ENCODE measurements at regions of chr5 and their contacts with region 1.

Region 1: GRCh38 chr5:132369474-132370180 is at the start of gene SLC22A5:
- DNase-seq: no peak
- ATAC-seq: peak; percentile 97
- H3K4me3 ChIP-seq: peak within 1 kb of the TSS; percentile 84
- H3K27ac ChIP-seq: peak within 1 kb of the TSS; percentile 31; the same call in 1 of the 2 replicates
- H3K4me1 ChIP-seq: peaks cover 8% of the 10 kb centered on the region
- H3K27me3 ChIP-seq: no peaks in the 10 kb centered on the region; a peak in 2 of 4 replicates
- CTCF ChIP-seq: no peak
- EP300 ChIP-seq: no peak
- POLR2A ChIP-seq: peak; percentile 71
- RAD21 ChIP-seq: no peak
- polyA plus RNA-seq, gene SLC22A5: 1.1 to 1.9 TPM

Region 2: DNA sequence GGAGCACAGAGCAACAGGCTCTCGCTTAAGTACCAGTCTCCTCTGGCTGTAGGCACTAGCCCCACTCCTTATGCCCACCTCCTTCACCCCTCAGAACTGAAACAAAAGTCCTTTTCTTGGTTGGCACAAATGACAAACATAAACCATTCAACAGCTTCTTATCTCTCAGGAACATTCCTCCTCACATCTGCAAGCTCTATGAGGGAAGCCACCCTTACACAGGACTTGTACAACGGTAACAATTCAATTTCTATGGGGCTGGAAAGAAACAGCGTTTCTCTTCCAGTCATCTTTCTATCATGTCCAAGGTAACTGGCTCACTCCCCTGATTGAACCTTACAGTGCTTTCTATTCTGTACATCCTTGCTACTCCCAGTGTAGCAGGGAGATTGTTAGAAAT is 222.0 kb before region 1 on chr5:
- CTCF ChIA-PET with region 1: no interaction called
- POLR2A ChIA-PET with region 1: no interaction called
- RAD21 ChIA-PET with region 1: no interaction called
- SMC1A ChIA-PET with region 1: no interaction called
- in situ Hi-C with region 1: no loop called
- intact Hi-C with region 1: no loop called
- DNase-seq: no peak
- ATAC-seq: no peak
- H3K4me3 ChIP-seq: no peak overlapping the region
- H3K27ac ChIP-seq: no peak overlapping the region
- H3K4me1 ChIP-seq: no peaks in the 10 kb centered on the region
- H3K27me3 ChIP-seq: no peaks in the 10 kb centered on the region
- CTCF ChIP-seq: no peak
- EP300 ChIP-seq: no peak
- POLR2A ChIP-seq: no peak
- RAD21 ChIP-seq: no peak

Region 3: GRCh38 chr5:132354381-132355139 is 15.1 kb before region 1 on chr5:
- CTCF ChIA-PET with region 1: interaction called, 24 read pairs
- POLR2A ChIA-PET with region 1: interaction called, 9 read pairs
- RAD21 ChIA-PET with region 1: interaction called, 21 read pairs
- SMC1A ChIA-PET with region 1: interaction called, 57 read pairs
- in situ Hi-C with region 1: no loop called
- intact Hi-C with region 1: no loop called
- DNase-seq: no peak
- ATAC-seq: peak; percentile 12; the same call in 1 of the 3 replicates
- H3K4me3 ChIP-seq: no peak overlapping the region
- H3K27ac ChIP-seq: no peak overlapping the region
- H3K4me1 ChIP-seq: peaks cover 12% of the 10 kb centered on the region
- H3K27me3 ChIP-seq: no peaks in the 10 kb centered on the region
- CTCF ChIP-seq: no peak
- EP300 ChIP-seq: no peak
- POLR2A ChIP-seq: no peak
- RAD21 ChIP-seq: no peak